ENCODE measurements at regions of chr20 and their contacts with region 1.

Region 1: GRCh38 chr20:16801919-16802911 is 54.1 kb downstream of the OTOR start:
- DNase-seq: peak; percentile 60
- H3K4me3 Mint-ChIP-seq: no peak overlapping the region
- H3K27ac Mint-ChIP-seq: no peak overlapping the region
- H3K4me1 Mint-ChIP-seq: no peaks in the 10 kb centered on the region
- H3K27me3 Mint-ChIP-seq: peaks cover 29% of the 10 kb centered on the region

Region 2: GRCh38 chr20:16816192-16816591 is 14.0 kb after region 1 on chr20:
- CTCF ChIA-PET with region 1: interaction called, 68 read pairs
- POLR2A ChIA-PET with region 1: no interaction called
- DNase-seq: no peak
- H3K4me3 Mint-ChIP-seq: no peak overlapping the region
- H3K27ac Mint-ChIP-seq: no peak overlapping the region
- H3K4me1 Mint-ChIP-seq: no peaks in the 10 kb centered on the region
- H3K27me3 Mint-ChIP-seq: peaks cover 4% of the 10 kb centered on the region

Region 3: GRCh38 chr20:16821211-16822089 is 19.2 kb after region 1 on chr20:
- CTCF ChIA-PET with region 1: interaction called, 68 read pairs
- POLR2A ChIA-PET with region 1: no interaction called
- DNase-seq: peak; percentile 38
- H3K4me3 Mint-ChIP-seq: no peak overlapping the region
- H3K27ac Mint-ChIP-seq: no peak overlapping the region
- H3K4me1 Mint-ChIP-seq: no peaks in the 10 kb centered on the region
- H3K27me3 Mint-ChIP-seq: peaks cover 14% of the 10 kb centered on the region

Region 4: GRCh38 chr20:16864069-16864468 is 61.9 kb after region 1 on chr20:
- CTCF ChIA-PET with region 1: no interaction called
- POLR2A ChIA-PET with region 1: no interaction called
- DNase-seq: no peak
- H3K4me3 Mint-ChIP-seq: no peak overlapping the region
- H3K27ac Mint-ChIP-seq: no peak overlapping the region
- H3K4me1 Mint-ChIP-seq: no peaks in the 10 kb centered on the region
- H3K27me3 Mint-ChIP-seq: no peaks in the 10 kb centered on the region

Region 5: GRCh38 chr20:17431621-17432364 is 629.6 kb after region 1 on chr20:
- CTCF ChIA-PET with region 1: interaction called, 10 read pairs
- POLR2A ChIA-PET with region 1: no interaction called
- DNase-seq: peak; percentile 51
- H3K4me3 Mint-ChIP-seq: no peak overlapping the region
- H3K27ac Mint-ChIP-seq: no peak overlapping the region
- H3K4me1 Mint-ChIP-seq: no peaks in the 10 kb centered on the region
- H3K27me3 Mint-ChIP-seq: peaks cover 22% of the 10 kb centered on the region